ENCODE measurements at regions of chr9 and their contacts with region 1.

Region 1: DNA sequence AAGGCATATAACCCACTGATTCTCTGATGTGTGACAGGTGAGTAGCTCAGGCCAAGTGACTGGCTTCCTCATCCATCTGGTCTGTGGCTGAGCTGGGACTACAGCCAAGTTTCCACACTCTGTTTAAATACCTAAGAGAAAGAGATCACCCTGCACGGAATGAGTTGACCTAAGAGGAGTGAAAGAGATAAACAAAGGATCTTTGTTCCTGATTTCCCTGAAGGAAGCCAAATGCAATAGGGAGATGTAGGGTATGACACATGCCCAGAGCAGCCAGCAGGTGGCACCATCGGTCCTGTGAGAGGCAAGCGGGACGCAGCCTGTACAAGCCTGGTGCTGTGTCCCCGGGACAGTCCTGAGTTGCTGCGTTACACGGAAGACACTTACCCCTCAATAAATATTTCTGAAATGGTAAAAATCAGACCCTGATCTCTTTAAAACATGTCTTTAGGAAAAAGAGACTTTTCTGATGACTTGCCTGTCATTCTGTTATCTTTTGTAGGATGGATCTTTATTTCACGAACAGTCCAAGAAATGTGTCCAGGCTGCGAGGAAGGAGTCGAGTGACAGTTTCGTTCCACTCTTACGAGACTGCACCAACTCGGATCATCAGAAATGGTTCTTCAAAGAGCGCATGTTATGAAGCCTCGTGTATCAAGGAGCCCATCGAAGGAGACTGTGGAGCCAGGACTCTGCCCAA is 41.1 kb downstream of the GALNT12 start:
- DNase-seq: peak; percentile 83
- CTCF ChIP-seq: peak; percentile 91

Region 2: DNA sequence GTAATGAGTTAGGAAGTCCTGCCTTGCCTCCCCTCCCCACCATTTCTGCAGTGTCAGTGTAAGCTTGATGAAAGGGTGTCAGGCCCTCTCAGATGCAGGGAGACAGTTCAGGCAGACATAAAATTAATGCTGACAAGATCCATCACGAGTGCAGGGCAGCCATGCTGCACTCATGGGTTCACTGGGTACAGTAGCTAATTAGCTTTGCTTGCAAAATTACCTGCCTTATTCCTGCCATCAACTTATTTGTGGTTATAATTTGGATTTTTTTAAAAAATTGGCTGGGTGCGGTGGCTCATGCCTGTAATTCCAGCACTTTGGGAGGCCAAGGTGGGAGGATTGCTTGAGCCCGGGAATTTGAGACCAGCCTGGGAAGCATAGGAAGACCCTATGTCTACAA is 23.2 kb before region 1 on chr9:
- CTCF ChIA-PET with region 1: interaction called, 13 read pairs
- POLR2A ChIA-PET with region 1: no interaction called
- DNase-seq: no peak
- CTCF ChIP-seq: no peak

Region 3: GRCh38 chr9:98860871-98861293 is 12.3 kb after region 1 on chr9:
- CTCF ChIA-PET with region 1: interaction called, 22 read pairs
- POLR2A ChIA-PET with region 1: no interaction called
- DNase-seq: no peak
- CTCF ChIP-seq: no peak

Region 4: GRCh38 chr9:98974994-98975712 is 126.6 kb after region 1 on chr9:
- CTCF ChIA-PET with region 1: interaction called, 24 read pairs
- POLR2A ChIA-PET with region 1: no interaction called
- DNase-seq: peak; percentile 89
- CTCF ChIP-seq: peak; percentile 97

Region 5: GRCh38 chr9:99140685-99141314 is 292.2 kb after region 1 on chr9:
- CTCF ChIA-PET with region 1: interaction called, 47 read pairs
- POLR2A ChIA-PET with region 1: no interaction called
- DNase-seq: peak; percentile 50
- CTCF ChIP-seq: peak; percentile 83

Measured in GM10248 (cell line).